OCI-LY7 (cell line): ENCODE measurements at regions of chr2 and their contacts with region 1.

Region 1: DNA sequence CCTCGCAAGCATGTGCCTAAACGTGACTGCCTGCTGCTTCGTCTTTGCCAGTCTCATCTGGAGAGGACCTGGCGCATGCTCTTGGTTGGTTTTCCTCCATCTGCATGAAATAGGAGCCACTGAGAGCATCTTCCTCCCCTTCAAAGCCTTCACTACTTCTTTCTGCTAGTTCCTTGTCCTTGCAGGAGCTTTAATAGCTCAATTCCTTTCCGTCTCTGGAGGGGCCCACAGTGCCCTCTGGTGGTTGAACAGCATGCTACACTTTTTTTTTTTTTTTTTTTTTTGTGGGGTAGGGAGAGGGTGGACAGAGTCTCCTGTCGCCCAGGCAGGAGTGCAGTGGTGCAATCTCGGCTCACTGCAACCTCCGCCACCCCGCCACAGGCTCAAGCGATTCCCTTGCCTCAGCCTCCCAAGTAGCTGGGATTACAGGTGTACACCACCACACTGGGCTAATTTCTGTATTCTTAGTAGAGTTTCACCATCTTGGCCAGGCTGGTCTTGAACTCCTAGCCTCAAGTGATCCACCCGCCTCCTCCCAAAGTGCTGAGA is 59.6 kb downstream of the SP110 start:
- DNase-seq: peak; percentile 49
- H3K4me3 ChIP-seq: no peak overlapping the region
- H3K27ac ChIP-seq: no peak overlapping the region
- H3K4me1 ChIP-seq: no peaks in the 10 kb centered on the region
- CTCF ChIP-seq: peak; percentile 86

Region 2: DNA sequence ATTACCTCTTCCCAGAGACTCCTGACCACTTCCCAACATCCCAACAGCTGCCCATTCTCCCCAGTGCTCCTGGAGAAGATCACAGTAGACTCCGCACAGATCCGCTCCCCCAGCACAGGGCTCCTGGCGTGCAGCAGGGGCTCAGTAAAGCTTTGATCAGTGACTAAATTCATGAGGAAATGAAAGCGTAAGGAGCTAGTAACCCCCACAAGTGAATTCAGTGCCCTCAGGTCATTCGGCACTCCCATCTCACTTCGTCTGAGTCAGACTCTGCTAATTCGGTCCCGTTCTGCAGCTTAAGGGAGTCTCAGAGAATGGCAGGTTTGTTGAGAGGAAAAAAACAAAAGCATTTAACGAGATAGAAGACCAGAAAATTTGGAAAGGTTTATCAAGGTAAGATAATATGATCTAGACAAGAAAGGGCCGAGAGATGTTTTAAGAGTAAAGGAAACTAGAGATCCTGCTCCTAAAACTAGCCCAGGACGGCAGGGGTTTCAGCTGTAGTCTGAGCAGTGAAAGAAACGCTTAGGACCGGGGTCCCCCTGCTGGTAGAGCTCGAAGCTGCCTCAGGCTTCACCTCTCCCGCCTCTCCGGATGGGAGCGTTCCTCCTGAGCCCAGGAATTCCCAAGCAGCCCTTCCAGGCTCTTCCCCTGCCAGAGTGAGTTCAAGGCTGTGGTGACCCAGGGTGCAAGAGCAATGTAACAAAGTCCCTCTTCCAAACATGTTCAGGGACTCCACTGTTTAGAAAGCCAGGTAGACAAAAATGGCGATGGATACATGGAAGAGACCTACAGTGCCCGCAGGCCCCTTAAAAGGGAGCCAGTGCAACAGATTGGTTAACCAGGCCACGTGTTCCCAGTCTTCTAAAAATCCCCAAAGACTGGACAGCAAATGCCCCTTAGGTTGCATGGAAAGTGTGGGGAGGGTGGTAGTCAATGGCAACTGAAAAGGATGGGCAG is 573.2 kb before region 1 on chr2:
- CTCF ChIA-PET with region 1: no interaction called
- POLR2A ChIA-PET with region 1: interaction called, 13 read pairs
- intact Hi-C with region 1: no loop called
- DNase-seq: peak; percentile 10
- H3K4me3 ChIP-seq: no peak overlapping the region
- H3K27ac ChIP-seq: no peak overlapping the region
- H3K4me1 ChIP-seq: no peaks in the 10 kb centered on the region
- CTCF ChIP-seq: peak; percentile 69

Region 3: DNA sequence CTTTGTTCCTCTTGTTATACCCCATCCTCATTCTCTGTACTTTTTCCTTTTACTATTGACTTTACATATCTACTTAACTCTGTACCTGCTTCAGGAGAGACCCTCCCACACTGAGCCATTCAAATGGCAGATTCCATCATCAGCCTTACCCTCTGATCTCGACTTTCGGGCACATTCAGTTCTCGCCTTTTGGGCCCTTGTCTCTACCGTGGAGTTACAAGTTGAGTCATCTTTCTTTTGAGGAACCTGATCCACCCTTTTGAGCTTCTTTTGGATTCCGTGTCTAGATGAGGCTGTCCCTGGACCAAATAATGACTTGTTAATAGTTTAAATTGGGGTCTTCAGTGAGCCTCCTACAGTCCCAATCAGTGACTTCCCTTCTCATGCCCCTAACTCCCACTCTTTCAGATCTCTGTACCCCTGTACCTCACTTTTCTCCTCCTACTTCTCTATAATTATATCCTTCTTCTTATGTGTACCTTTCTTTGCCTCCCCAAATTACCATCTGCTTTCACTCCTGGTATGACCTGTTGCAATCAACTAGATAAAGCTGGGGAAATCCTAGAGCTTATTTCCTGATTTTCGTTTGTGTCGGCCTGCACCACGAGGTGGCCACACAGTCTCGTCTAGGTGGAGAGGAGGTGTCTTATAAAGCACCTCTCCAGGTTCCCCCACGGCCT is 42.4 kb after region 1 on chr2:
- CTCF ChIA-PET with region 1: no interaction called
- POLR2A ChIA-PET with region 1: no interaction called
- intact Hi-C with region 1: no loop called
- DNase-seq: peak; percentile 74
- H3K4me3 ChIP-seq: no peak overlapping the region
- H3K27ac ChIP-seq: no peak overlapping the region
- H3K4me1 ChIP-seq: peaks cover 47% of the 10 kb centered on the region
- CTCF ChIP-seq: peak; percentile 84

Region 4: DNA sequence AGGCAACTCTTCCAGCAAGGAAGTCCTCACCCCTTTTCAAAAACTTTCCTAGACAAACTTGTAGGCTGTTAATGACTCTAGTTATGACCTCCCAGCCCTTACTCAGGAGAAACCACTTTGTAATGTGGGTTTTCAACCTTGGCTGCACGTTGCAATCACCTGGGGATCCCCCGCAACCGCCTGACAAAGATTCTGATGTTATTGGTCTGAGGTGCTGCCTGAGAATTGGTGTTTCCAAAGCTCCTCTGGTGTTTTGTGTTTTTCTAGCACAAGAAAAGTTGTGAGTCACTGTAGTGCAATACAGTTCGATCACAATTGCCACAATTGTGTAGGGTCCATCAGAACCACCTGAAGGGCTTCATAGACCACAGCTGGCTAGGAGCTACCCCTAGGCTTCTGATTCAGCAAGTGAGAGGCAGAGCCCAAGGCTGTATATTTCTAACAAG is 377.4 kb after region 1 on chr2:
- CTCF ChIA-PET with region 1: no interaction called
- POLR2A ChIA-PET with region 1: no interaction called
- intact Hi-C with region 1: no loop called
- DNase-seq: peak; percentile 6
- H3K4me3 ChIP-seq: no peak overlapping the region
- H3K27ac ChIP-seq: no peak overlapping the region
- H3K4me1 ChIP-seq: peaks cover 15% of the 10 kb centered on the region
- CTCF ChIP-seq: no peak